Left colon (tissue), 2 donors: ENCODE measurements at regions of chr4 and their contacts with region 1.

Region 1: GRCh38 chr4:151362404-151363164 is 37.2 kb upstream of the SH3D19 start:
- DNase-seq: peak; percentile 68 to 82
- ATAC-seq: peak; percentile 88

Region 2: GRCh38 chr4:150990250-150990649 is 372.3 kb before region 1 on chr4:
- intact Hi-C with region 1: no loop called
- DNase-seq: no peak
- ATAC-seq: no peak

Region 3: GRCh38 chr4:151117371-151117962 is 245.1 kb before region 1 on chr4:
- intact Hi-C with region 1: loop called in 1 of 2 experiments (anchors 5 kb)
- DNase-seq: peak in 1 of 2 donors; percentile 64
- ATAC-seq: peak; percentile 86

Region 4: GRCh38 chr4:151276787-151277562 is 85.6 kb before region 1 on chr4 and contains the start of gene PRSS48:
- intact Hi-C with region 1: loop called in 1 of 2 experiments (anchors 5 kb)
- DNase-seq: peak; percentile 44 to 77
- ATAC-seq: peak; percentile 87
- total RNA-seq, gene PRSS48: not detected